ENCODE measurements at regions of chr19 and their contacts with region 1.

Region 1: GRCh38 chr19:51393959-51394836 is 3.8 kb upstream of the C19orf84 start:
- DNase-seq: peak; percentile 96
- H3K4me3 Mint-ChIP-seq: peak overlapping the region; percentile 93
- H3K27ac Mint-ChIP-seq: peak overlapping the region; percentile 98
- H3K4me1 Mint-ChIP-seq: peaks cover 51% of the 10 kb centered on the region
- H3K27me3 Mint-ChIP-seq: no peaks in the 10 kb centered on the region

Region 2: DNA sequence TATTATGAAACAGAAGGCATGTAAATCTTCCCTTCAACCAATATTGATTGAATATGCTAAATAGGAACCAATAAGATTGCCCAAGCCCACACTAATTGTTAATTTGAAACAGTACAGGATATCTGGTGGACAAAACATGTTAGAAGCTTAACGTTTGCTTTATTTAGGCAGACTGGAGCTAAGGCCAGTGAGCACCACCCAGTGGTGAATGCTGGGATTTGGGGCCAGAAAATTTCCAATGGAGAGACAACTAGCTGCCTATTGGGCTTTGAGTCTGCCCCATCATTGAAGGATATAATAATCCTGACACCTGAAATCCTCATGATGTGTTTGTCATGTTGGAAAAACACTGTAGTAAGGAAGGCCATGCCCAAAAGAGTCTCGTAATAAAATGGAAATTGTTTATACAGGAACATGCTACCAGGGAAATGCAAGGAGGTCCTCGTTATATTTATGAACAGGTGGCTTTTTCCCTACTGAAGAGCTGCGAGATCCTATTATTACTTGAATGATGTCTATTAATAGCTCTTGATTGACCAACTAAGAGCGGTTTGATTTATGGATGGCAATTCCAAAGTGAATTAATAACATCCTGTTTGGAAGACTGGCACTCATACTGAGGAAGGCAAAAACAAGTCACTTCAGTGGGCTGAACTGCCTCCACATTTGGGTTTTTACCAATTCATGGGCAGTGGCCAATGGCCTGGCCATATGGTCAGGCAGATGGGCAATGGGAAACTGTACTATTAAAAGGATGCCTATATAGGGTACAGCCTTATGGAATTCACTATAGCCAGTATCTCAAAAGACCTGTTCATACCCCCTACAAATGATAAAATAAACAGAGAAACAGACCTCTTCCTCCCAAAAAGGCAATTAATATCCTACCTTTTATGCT is 134.6 kb before region 1 on chr19:
- intact Hi-C with region 1: loop called (anchors 1 kb)
- DNase-seq: peak; percentile 61
- H3K4me3 Mint-ChIP-seq: no peak overlapping the region
- H3K27ac Mint-ChIP-seq: no peak overlapping the region
- H3K4me1 Mint-ChIP-seq: peaks cover 44% of the 10 kb centered on the region
- H3K27me3 Mint-ChIP-seq: peaks cover 26% of the 10 kb centered on the region

Region 3: GRCh38 chr19:51311351-51312257 is 82.6 kb before region 1 on chr19 and contains the start of gene IGLON5:
- intact Hi-C with region 1: no loop called
- DNase-seq: no peak
- H3K4me3 Mint-ChIP-seq: no peak within 1 kb of the TSS
- H3K27ac Mint-ChIP-seq: no peak within 1 kb of the TSS
- H3K4me1 Mint-ChIP-seq: peaks cover 2% of the 10 kb centered on the region
- H3K27me3 Mint-ChIP-seq: peaks cover 32% of the 10 kb centered on the region
- total RNA-seq, gene IGLON5: 7.0 TPM in 2 replicates

Region 4: GRCh38 chr19:51338563-51339312 is 55.5 kb before region 1 on chr19:
- intact Hi-C with region 1: loop called (anchors 1 kb)
- DNase-seq: peak; percentile 83
- H3K4me3 Mint-ChIP-seq: peak overlapping the region; percentile 95
- H3K27ac Mint-ChIP-seq: peak overlapping the region; percentile 89
- H3K4me1 Mint-ChIP-seq: peaks cover 23% of the 10 kb centered on the region
- H3K27me3 Mint-ChIP-seq: peaks cover 2% of the 10 kb centered on the region

Region 5: GRCh38 chr19:51367565-51368365 is 26.4 kb before region 1 on chr19:
- intact Hi-C with region 1: loop called (anchors 1 kb)
- DNase-seq: peak; percentile 98
- H3K4me3 Mint-ChIP-seq: peak overlapping the region; percentile 98
- H3K27ac Mint-ChIP-seq: peak overlapping the region; percentile 95
- H3K4me1 Mint-ChIP-seq: peaks cover 49% of the 10 kb centered on the region
- H3K27me3 Mint-ChIP-seq: no peaks in the 10 kb centered on the region

Region 6: GRCh38 chr19:51372649-51373504 is 21.3 kb before region 1 on chr19 and contains the start of gene NKG7:
- intact Hi-C with region 1: loop called (anchors 1 kb)
- DNase-seq: peak; percentile 72
- H3K4me3 Mint-ChIP-seq: peak within 1 kb of the TSS; percentile 84
- H3K27ac Mint-ChIP-seq: peak within 1 kb of the TSS; percentile 94
- H3K4me1 Mint-ChIP-seq: peaks cover 65% of the 10 kb centered on the region
- H3K27me3 Mint-ChIP-seq: no peaks in the 10 kb centered on the region
- total RNA-seq, gene NKG7: 332 and 342 TPM in 2 replicates

Region 7: GRCh38 chr19:51422053-51422448 is 27.9 kb after region 1 on chr19:
- intact Hi-C with region 1: loop called (anchors 1 kb)
- DNase-seq: peak; percentile 80
- H3K4me3 Mint-ChIP-seq: peak overlapping the region; percentile 26
- H3K27ac Mint-ChIP-seq: no peak overlapping the region
- H3K4me1 Mint-ChIP-seq: peaks cover 22% of the 10 kb centered on the region
- H3K27me3 Mint-ChIP-seq: no peaks in the 10 kb centered on the region

Region 8: DNA sequence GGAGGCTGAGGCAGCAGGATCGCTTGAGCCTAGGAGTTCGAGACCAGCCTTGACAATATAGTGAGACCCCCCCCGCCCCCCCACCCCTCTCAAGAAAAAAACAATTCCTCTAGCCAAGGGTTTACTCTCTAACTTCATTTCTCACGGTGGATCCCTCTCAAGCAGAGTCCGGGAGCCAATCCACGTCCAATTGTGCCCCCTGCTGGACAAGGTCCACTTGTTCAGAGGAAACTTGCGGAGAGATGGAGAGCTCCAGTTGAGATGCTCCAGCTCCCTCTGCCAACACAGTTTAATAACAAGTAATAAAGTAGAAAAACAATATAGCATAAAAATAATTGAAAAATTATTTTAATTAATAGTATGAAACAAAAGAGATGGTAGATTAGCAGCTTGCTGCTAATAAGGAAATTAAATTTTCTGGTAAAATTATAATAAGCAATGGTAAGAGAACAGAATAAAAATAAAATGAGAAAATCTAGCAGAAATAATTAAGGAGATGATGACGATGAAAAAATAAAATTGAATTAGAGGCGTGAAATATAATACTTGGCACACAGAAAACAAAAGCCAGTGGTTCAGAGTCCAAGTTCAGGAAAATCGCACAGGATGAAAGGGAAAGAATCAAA is 266.9 kb after region 1 on chr19:
- intact Hi-C with region 1: loop called (anchors 1 kb)
- DNase-seq: peak; percentile 26
- H3K4me3 Mint-ChIP-seq: no peak overlapping the region
- H3K27ac Mint-ChIP-seq: no peak overlapping the region
- H3K4me1 Mint-ChIP-seq: peaks cover 5% of the 10 kb centered on the region
- H3K27me3 Mint-ChIP-seq: peaks cover 21% of the 10 kb centered on the region